A549 (cell line): ENCODE measurements at regions of chr19 and their contacts with region 1.

Region 1: GRCh38 chr19:531009-531752 is 379 bp upstream of the CDC34 start:
- DNase-seq: peak; percentile 79 to 82
- ATAC-seq: peak; percentile 60 to 77
- H3K4me3 ChIP-seq: peak overlapping the region; percentile 87
- H3K27ac ChIP-seq: peak overlapping the region; percentile 98 to 100
- H3K4me1 ChIP-seq: peaks cover 34% of the 10 kb centered on the region
- CTCF ChIP-seq: no peak
- EP300 ChIP-seq: no peak
- POLR2A ChIP-seq: peak; percentile 32
- RAD21 ChIP-seq: no peak

Region 2: GRCh38 chr19:294946-295686 is 236.1 kb before region 1 on chr19:
- CTCF ChIA-PET with region 1: no interaction called
- POLR2A ChIA-PET with region 1: no interaction called
- DNase-seq: peak; percentile 29 to 50
- ATAC-seq: peak; percentile 65 to 82
- H3K4me3 ChIP-seq: no peak overlapping the region
- H3K27ac ChIP-seq: no peak overlapping the region
- H3K4me1 ChIP-seq: 0 out of 3 replicates have a peak, but pooled peaks cover 4% of the 10 kb centered on the region
- CTCF ChIP-seq: peak; percentile 67
- EP300 ChIP-seq: no peak
- POLR2A ChIP-seq: no peak
- RAD21 ChIP-seq: peak; percentile 31 to 48; a peak in 3 of 5 replicates

Region 3: DNA sequence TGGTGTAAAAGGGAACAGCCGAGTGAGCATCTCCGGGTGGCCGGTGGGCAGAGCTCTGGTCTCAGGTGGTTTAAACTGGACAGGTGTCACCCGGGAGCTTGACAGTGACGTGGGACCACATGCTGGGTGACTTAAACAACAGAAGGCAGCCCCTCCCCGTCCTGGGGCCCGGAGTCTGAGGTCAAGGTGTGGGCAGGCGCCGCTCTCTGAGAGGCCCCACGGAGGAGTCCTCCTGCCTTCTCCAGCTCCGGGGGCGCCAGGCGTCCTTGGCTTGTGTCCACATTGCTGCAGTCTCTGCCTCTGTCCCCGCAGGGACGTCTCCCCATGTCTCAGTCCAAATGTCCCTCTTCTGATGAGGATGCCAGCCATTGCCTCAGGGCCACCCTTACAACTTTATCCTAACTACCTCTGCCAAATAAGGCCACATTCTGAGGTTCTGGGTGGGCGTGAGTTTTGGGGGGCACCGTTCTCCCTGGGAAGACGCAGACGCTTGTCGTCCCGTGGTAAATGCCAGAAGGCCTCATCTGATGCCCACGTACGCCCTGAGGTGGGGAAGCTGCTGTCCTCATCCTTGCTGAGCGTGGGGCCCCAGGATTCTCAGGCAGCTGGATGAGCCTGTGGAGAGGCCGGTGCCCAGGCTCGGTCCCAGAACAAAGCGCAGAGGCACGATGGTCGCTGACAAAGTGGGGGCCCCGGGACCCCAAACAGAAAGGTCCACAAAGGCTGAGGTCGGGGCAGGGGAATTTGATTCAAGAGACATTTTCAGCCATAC is 25.6 kb after region 1 on chr19:
- CTCF ChIA-PET with region 1: interaction called, 10 read pairs
- POLR2A ChIA-PET with region 1: interaction called, 5 read pairs
- DNase-seq: no peak
- ATAC-seq: peak; percentile 35 to 46; a peak in 5 of 6 replicates
- H3K4me3 ChIP-seq: peak overlapping the region; percentile 19; the same call in 1 of the 3 replicates
- H3K27ac ChIP-seq: peak overlapping the region; percentile 80 to 81
- H3K4me1 ChIP-seq: peaks cover 18% of the 10 kb centered on the region
- CTCF ChIP-seq: no peak
- EP300 ChIP-seq: no peak
- POLR2A ChIP-seq: no peak
- RAD21 ChIP-seq: no peak

Region 4: GRCh38 chr19:591099-591958 is 60.1 kb after region 1 on chr19:
- CTCF ChIA-PET with region 1: no interaction called
- POLR2A ChIA-PET with region 1: no interaction called
- DNase-seq: no peak
- ATAC-seq: no peak
- H3K4me3 ChIP-seq: peak overlapping the region; percentile 65
- H3K27ac ChIP-seq: peak overlapping the region; percentile 82 to 95
- H3K4me1 ChIP-seq: peaks cover 41% of the 10 kb centered on the region
- CTCF ChIP-seq: no peak
- EP300 ChIP-seq: no peak
- POLR2A ChIP-seq: no peak
- RAD21 ChIP-seq: no peak